Activated CD4-positive, alpha-beta T cell treated with anti-CD3 and anti-CD28 coated beads for 36 hours (primary cell): ENCODE measurements at regions of chr7 and their contacts with region 1.

Region 1: GRCh38 chr7:115910541-115911164 is 119.9 kb downstream of the TFEC start:
- DNase-seq: no peak
- ATAC-seq: no peak
- H3K4me3 Mint-ChIP-seq: no peak overlapping the region
- H3K27ac Mint-ChIP-seq: no peak overlapping the region
- H3K4me1 Mint-ChIP-seq: no peaks in the 10 kb centered on the region
- H3K27me3 Mint-ChIP-seq: peaks cover 5% of the 10 kb centered on the region

Region 2: DNA sequence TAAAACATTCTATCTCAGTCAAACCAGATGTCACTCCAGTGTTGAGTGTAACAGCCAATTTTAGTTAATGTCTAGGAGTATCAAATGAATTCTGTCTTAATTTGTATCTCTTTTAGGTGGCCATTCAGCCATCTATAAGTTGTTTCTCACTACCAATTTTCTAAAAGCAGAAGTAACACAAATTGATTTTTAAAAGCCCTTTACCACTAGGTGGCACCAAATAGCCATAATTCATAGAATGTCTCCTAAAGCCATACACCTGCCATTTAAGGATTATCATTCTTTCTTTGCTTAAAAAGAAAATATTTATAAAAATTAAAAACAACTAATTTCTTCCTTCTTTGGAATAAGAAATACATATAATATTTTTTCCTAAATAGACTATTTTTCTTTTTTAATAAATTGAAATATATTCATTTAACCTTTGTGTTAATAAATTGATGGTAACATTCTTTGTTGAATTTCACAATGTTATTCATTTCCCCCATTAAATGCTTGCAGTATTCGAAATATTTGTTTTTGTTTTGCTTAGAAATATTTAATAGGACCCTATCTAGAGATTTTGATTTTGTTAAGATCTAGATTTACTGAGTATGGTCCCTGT is 1884.1 kb before region 1 on chr7:
- CTCF ChIA-PET with region 1: no interaction called
- POLR2A ChIA-PET with region 1: no interaction called
- intact Hi-C with region 1: loop called (anchors 2 kb)
- DNase-seq: no peak
- ATAC-seq: no peak
- H3K4me3 Mint-ChIP-seq: no peak overlapping the region
- H3K27ac Mint-ChIP-seq: no peak overlapping the region
- H3K4me1 Mint-ChIP-seq: no peaks in the 10 kb centered on the region
- H3K27me3 Mint-ChIP-seq: no peaks in the 10 kb centered on the region

Region 3: DNA sequence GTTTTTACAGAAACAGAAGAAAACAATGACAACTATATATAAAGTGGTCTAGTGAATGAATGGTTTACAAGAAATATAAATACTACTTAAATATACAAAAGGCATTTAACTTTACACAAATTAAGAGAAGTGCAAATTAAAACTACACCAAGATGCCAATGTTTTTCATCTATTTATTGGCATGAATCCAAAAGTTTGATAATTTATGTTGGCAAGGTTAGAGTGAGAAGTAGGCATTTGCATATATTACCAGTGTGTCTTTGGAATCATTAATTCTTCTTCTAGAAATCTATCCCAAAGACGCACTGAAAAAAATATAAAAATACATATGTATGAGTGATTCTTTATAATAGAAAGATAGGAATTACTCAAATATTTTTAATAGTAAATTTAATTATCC is 531.3 kb before region 1 on chr7:
- CTCF ChIA-PET with region 1: no interaction called
- POLR2A ChIA-PET with region 1: no interaction called
- intact Hi-C with region 1: loop called in 1 of 2 experiments (anchors 10 kb)
- DNase-seq: no peak
- ATAC-seq: no peak
- H3K4me3 Mint-ChIP-seq: no peak overlapping the region
- H3K27ac Mint-ChIP-seq: no peak overlapping the region
- H3K4me1 Mint-ChIP-seq: no peaks in the 10 kb centered on the region
- H3K27me3 Mint-ChIP-seq: no peaks in the 10 kb centered on the region

Region 4: DNA sequence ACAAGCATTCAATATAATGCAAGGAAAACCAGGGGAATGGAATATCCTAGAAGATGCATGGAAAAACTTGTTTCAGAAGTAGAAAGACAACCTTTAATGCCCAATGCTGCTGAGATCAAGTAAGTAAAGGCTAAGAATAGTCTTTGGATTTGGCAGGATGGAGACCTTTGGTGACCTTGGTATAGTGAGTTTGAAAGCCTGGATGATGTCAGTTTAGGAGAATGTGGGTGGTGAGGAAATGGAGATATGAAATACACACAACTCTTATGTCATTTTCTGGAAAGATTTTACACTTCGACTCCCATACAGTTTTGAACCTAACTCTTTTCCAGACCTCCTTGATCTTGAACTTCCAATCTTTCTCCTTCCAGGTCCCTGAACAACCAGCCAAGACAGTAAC is 65.8 kb before region 1 on chr7:
- CTCF ChIA-PET with region 1: no interaction called
- POLR2A ChIA-PET with region 1: no interaction called
- intact Hi-C with region 1: loop called in 1 of 2 experiments (anchors 10 kb)
- DNase-seq: no peak
- ATAC-seq: no peak
- H3K4me3 Mint-ChIP-seq: no peak overlapping the region
- H3K27ac Mint-ChIP-seq: no peak overlapping the region
- H3K4me1 Mint-ChIP-seq: no peaks in the 10 kb centered on the region
- H3K27me3 Mint-ChIP-seq: no peaks in the 10 kb centered on the region

Region 5: GRCh38 chr7:115869225-115869624 is 41.4 kb before region 1 on chr7:
- CTCF ChIA-PET with region 1: no interaction called
- POLR2A ChIA-PET with region 1: no interaction called
- intact Hi-C with region 1: no loop called
- DNase-seq: no peak
- ATAC-seq: no peak
- H3K4me3 Mint-ChIP-seq: no peak overlapping the region
- H3K27ac Mint-ChIP-seq: no peak overlapping the region
- H3K4me1 Mint-ChIP-seq: no peaks in the 10 kb centered on the region
- H3K27me3 Mint-ChIP-seq: no peaks in the 10 kb centered on the region

Region 6: DNA sequence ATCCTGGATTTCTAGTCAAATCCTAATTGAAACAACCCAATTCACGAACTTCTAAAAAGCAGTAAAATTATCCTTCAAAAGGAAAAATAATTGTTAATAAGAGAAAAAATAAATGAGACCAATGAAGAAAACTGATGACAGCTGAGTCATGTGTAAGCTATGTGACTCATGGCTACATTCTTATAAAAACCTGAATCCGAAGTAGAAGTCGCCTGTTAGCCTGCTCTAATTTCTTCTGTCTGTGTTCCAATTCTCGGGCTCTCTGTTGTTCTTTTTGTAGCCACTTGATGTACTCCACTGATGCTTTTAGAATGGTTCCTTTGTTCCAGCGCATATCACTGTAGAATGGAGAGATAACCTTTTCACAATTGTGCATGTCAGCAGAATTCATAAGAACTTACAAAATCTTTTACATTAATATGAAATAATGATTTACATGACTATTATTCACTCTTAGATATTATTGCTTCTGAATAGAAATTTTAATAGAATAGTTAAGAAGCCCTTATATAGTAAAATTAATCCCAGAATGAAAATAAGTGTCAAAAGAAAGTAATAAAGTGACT is 31.1 kb after region 1 on chr7:
- CTCF ChIA-PET with region 1: no interaction called
- POLR2A ChIA-PET with region 1: no interaction called
- intact Hi-C with region 1: no loop called
- DNase-seq: no peak
- ATAC-seq: no peak
- H3K4me3 Mint-ChIP-seq: no peak overlapping the region
- H3K27ac Mint-ChIP-seq: no peak overlapping the region
- H3K4me1 Mint-ChIP-seq: no peaks in the 10 kb centered on the region
- H3K27me3 Mint-ChIP-seq: no peaks in the 10 kb centered on the region